ENCODE measurements at regions of chr18 and their contacts with region 1.

Region 1: DNA sequence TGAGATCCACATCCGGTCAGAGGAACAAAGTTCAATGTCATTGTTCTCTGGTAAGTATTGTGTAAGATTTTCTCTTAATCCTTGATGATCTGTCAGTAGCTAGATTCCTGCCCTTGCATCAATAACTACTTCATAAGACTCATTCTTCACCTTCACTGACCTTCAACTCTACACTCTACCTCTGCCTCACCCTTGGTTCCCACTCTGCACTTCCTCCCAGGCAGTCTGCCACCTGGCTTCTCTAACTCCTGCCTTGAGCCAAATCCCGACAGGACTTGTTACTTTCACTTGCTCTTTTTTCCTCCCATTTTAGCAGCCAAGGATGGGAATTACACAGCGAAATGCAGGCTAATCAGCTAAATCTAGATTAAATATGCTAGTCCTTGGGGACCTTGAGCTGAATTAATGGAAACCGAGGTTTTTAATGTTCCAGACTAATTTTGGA is 190.7 kb downstream of the DLGAP1 start:
- DNase-seq: no peak
- H3K4me3 ChIP-seq: no peak overlapping the region
- H3K27ac ChIP-seq: no peak overlapping the region
- H3K4me1 ChIP-seq: no peaks in the 10 kb centered on the region
- H3K27me3 ChIP-seq: no peaks in the 10 kb centered on the region
- CTCF ChIP-seq: no peak
- EP300 ChIP-seq: no peak
- POLR2A ChIP-seq: no peak

Region 2: GRCh38 chr18:5693699-5694294 is 1429.4 kb after region 1 on chr18:
- in situ Hi-C with region 1: no loop called
- intact Hi-C with region 1: loop called (anchors 5 kb)
- DNase-seq: no peak
- H3K4me3 ChIP-seq: no peak overlapping the region
- H3K27ac ChIP-seq: no peak overlapping the region
- H3K4me1 ChIP-seq: no peaks in the 10 kb centered on the region
- H3K27me3 ChIP-seq: no peaks in the 10 kb centered on the region
- CTCF ChIP-seq: no peak
- EP300 ChIP-seq: no peak
- POLR2A ChIP-seq: no peak